ENCODE measurements at regions of chr2 and their contacts with region 1.

Region 1: GRCh38 chr2:196213252-196213980 is 42.0 kb upstream of the STK17B start:
- DNase-seq: no peak
- ATAC-seq: no peak
- H3K4me3 Mint-ChIP-seq: no peak overlapping the region
- H3K27ac Mint-ChIP-seq: no peak overlapping the region
- H3K4me1 Mint-ChIP-seq: peaks cover 78% of the 10 kb centered on the region
- H3K27me3 Mint-ChIP-seq: no peaks in the 10 kb centered on the region

Region 2: GRCh38 chr2:196200557-196200956 is 12.9 kb before region 1 on chr2:
- CTCF ChIA-PET with region 1: interaction called, 7 read pairs
- POLR2A ChIA-PET with region 1: interaction called, 17 read pairs
- DNase-seq: peak; percentile 63
- ATAC-seq: peak; percentile 99
- H3K4me3 Mint-ChIP-seq: peak overlapping the region; percentile 58
- H3K27ac Mint-ChIP-seq: peak overlapping the region; percentile 76
- H3K4me1 Mint-ChIP-seq: peaks cover 47% of the 10 kb centered on the region
- H3K27me3 Mint-ChIP-seq: no peaks in the 10 kb centered on the region

Region 3: DNA sequence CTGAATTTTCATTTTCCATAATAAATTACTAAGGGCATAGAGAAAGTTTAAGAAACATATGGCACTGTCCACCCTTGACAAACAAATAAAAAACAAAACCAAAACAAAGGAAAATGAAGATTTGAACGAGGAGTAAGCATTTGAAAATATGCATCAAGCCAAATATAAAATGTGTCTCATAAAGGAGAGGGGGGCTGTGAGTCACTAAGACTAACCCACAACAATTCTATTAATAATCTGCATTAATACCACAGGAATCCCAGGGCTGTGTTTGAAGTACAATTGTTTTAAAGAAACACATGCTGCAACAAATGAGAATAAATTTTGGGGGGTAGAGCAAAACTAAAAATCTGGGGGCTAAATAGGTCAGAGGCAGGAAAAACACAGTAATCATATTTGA is 11.8 kb after region 1 on chr2:
- CTCF ChIA-PET with region 1: interaction called, 83 read pairs
- POLR2A ChIA-PET with region 1: interaction called, 20 read pairs
- DNase-seq: no peak
- ATAC-seq: no peak
- H3K4me3 Mint-ChIP-seq: peak overlapping the region; percentile 12
- H3K27ac Mint-ChIP-seq: peak overlapping the region; percentile 27
- H3K4me1 Mint-ChIP-seq: peaks cover 80% of the 10 kb centered on the region
- H3K27me3 Mint-ChIP-seq: no peaks in the 10 kb centered on the region

Measured in activated CD8-positive, alpha-beta T cell treated with anti-CD3 and anti-CD28 coated beads, Interleukin-2, amount 10 ng/mL, durations not matched to agents 7 days and 5 days (primary cell).